Activated CD8-positive, alpha-beta T cell treated with anti-CD3 and anti-CD28 coated beads, Interleukin-2, amount 10 ng/mL, durations not matched to agents 7 days and 5 days (primary cell): ENCODE measurements at regions of chr7 and their contacts with region 1.

Region 1: GRCh38 chr7:144786522-144786921 is 49.3 kb downstream of the TPK1 start:
- DNase-seq: peak; percentile 28
- ATAC-seq: peak; percentile 61
- H3K4me3 Mint-ChIP-seq: no peak overlapping the region
- H3K27ac Mint-ChIP-seq: no peak overlapping the region
- H3K4me1 Mint-ChIP-seq: no peaks in the 10 kb centered on the region
- H3K27me3 Mint-ChIP-seq: no peaks in the 10 kb centered on the region

Region 2: GRCh38 chr7:143938379-143939243 is 847.9 kb before region 1 on chr7:
- CTCF ChIA-PET with region 1: no interaction called
- POLR2A ChIA-PET with region 1: no interaction called
- DNase-seq: no peak
- ATAC-seq: no peak
- H3K4me3 Mint-ChIP-seq: no peak overlapping the region
- H3K27ac Mint-ChIP-seq: no peak overlapping the region
- H3K4me1 Mint-ChIP-seq: no peaks in the 10 kb centered on the region
- H3K27me3 Mint-ChIP-seq: peaks cover 3% of the 10 kb centered on the region

Region 3: DNA sequence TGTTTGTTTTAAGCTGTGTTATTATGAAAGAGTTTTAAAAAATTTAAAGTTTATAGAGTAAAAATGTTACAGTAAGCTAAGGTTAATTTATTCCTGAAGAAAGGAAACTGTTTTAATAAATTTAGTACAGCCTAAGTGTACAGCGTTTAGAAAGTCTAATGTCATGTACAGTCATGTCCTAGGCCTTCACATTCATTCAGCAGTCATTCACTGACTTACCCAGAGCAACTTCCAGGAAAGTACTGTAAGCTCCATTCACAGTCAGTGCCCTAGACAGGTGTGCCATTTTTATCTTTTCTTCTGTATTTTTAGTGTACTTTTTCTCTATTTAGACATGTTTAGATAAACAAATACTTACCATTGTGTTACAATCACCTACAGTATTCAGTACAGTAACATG is 77.5 kb before region 1 on chr7:
- CTCF ChIA-PET with region 1: no interaction called
- POLR2A ChIA-PET with region 1: no interaction called
- DNase-seq: no peak
- ATAC-seq: no peak
- H3K4me3 Mint-ChIP-seq: no peak overlapping the region
- H3K27ac Mint-ChIP-seq: no peak overlapping the region
- H3K4me1 Mint-ChIP-seq: no peaks in the 10 kb centered on the region
- H3K27me3 Mint-ChIP-seq: no peaks in the 10 kb centered on the region

Region 4: GRCh38 chr7:144738708-144739314 is 47.7 kb before region 1 on chr7:
- CTCF ChIA-PET with region 1: interaction called, 13 read pairs
- POLR2A ChIA-PET with region 1: no interaction called
- DNase-seq: peak; percentile 32
- ATAC-seq: no peak
- H3K4me3 Mint-ChIP-seq: no peak overlapping the region
- H3K27ac Mint-ChIP-seq: no peak overlapping the region
- H3K4me1 Mint-ChIP-seq: no peaks in the 10 kb centered on the region
- H3K27me3 Mint-ChIP-seq: no peaks in the 10 kb centered on the region

Region 5: GRCh38 chr7:144812379-144813283 is 26.1 kb after region 1 on chr7:
- CTCF ChIA-PET with region 1: interaction called, 16 read pairs
- POLR2A ChIA-PET with region 1: no interaction called
- DNase-seq: peak; percentile 75
- ATAC-seq: peak; percentile 97
- H3K4me3 Mint-ChIP-seq: peak overlapping the region; percentile 65
- H3K27ac Mint-ChIP-seq: peak overlapping the region; percentile 82
- H3K4me1 Mint-ChIP-seq: peaks cover 43% of the 10 kb centered on the region
- H3K27me3 Mint-ChIP-seq: no peaks in the 10 kb centered on the region